ENCODE measurements at regions of chr22 and their contacts with region 1.

Region 1: DNA sequence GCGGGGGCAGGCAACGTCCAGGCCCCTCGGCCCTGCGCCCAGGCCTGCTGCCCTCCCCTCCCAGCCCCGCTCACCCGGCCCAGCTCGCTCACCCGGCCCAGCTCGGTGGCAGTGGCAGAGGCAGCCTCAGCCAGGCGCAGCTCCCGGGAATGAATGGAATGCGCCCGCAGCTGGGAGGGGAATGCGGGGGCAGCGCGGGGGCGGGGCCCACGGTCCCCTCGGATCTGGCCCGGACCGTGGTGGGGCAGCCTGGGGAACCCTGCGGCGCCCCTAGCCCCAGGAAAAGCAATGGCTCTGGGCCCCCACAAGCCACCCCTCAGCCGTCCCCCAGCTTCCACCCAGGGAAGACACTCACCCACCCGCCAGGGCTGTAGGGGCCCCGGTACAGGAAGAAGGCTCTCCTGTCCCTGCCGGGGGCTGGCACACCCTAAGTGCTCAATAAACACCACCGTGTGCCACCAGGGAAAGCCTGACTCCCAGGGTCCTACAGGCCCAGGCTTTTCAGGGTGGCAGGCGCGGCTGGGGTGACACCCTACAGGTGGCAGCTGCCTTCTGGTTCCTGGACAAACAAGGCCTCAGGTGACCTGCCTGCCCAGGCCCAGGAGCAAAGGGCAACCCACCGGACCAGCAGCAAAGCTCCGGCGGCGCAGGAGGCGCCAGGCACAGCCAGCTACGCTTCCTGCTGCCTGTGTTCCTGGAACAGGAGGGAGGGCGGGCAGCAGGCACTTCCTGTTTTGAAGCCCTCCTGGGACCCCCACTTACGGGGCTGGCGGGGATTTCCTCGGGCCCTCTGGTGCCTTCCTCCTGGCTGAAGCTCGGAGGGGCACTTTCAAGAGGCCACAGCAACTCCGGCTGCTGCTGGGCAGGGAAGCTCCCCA is 13.8 kb downstream of the PLXNB2 start:
- DNase-seq: peak in 5 of 10 donors; percentile 17 to 37 (median 33)
- ATAC-seq: peak; percentile 60 to 63
- H3K4me3 Mint-ChIP-seq: peak overlapping the region; percentile 25 to 82 (median 60)
- H3K27ac Mint-ChIP-seq: peak overlapping the region in 6 of 10 donors; percentile 6 to 66 (median 33)
- H3K4me1 Mint-ChIP-seq: peaks cover 11 to 23% (median 19%) of the 10 kb centered on the region in 4 donors
- H3K27me3 Mint-ChIP-seq: peaks cover 0 to 31% (median 0%) of the 10 kb centered on the region in 5 donors

Region 2: DNA sequence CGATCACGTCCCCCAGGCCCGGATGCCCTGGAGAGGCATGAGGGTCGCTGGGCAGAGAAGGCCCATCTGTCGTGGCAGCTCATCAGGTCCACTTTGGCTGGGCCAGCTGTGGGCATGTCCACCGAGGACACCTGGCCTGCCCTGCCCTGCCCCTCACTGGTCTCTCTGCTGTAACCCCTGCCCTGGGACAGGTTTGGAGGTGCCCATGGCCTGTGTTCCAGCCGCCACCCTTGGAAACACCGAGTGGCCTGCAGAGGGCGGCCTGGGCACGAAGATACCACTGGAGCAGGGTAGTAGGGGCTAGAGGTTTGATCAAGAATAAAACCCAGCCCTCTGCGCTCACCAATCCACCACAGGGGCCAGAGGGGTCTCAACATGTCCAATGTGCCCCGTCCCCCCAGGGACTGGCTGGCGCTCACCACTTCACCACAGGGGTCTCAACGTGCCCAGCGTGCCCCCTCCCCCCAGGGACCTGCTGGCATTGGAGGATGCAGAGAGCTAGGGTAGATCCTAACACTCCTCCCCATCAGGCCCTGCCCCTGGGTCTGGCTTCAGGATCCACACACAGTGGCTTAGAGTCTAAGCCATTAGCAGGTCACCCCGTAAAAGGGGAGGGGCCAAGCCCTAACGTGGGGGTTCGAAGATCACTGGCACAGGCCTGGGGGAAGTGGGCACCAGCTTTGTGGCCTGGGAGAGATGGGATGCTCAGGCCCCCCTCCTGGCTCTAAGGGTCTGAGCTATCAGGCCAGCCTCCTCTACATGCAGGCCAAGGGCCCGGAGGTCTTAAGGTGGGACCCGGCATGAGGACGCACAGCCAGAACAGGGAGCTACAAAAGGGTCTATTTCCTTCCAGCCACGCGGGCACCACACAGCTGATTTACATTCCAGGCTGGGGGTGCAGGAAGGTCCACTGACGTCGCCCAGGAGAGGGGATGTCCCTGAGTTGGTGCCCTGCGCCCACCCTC is 41.3 kb before region 1 on chr22:
- POLR2A ChIA-PET with region 1: no interaction called
- DNase-seq: peak; percentile 57 to 86 (median 70)
- ATAC-seq: peak; percentile 72 to 80
- H3K4me3 Mint-ChIP-seq: peak overlapping the region; percentile 52 to 83 (median 70)
- H3K27ac Mint-ChIP-seq: peak overlapping the region in 9 of 10 donors; percentile 23 to 83 (median 43)
- H3K4me1 Mint-ChIP-seq: peaks cover 0 to 20% (median 6%) of the 10 kb centered on the region in 4 donors
- H3K27me3 Mint-ChIP-seq: no peaks in the 10 kb centered on the region

Region 3: GRCh38 chr22:50306753-50307749 is 13.4 kb after region 1 on chr22 and contains the start of gene PLXNB2:
- POLR2A ChIA-PET with region 1: interaction called, 15 read pairs
- DNase-seq: peak in 4 of 10 donors; percentile 26 to 39 (median 32)
- ATAC-seq: peak; percentile 70 to 78
- H3K4me3 Mint-ChIP-seq: peak within 1 kb of the TSS in 8 of 10 donors; percentile 24 to 70 (median 48)
- H3K27ac Mint-ChIP-seq: peak within 1 kb of the TSS in 3 of 10 donors; percentile 27 to 56 (median 34)
- H3K4me1 Mint-ChIP-seq: peaks cover 9 to 26% (median 14%) of the 10 kb centered on the region in 4 donors
- H3K27me3 Mint-ChIP-seq: peaks cover 4 to 19% (median 7%) of the 10 kb centered on the region in 5 donors
- polyA plus RNA-seq, gene PLXNB2: 0.72 to 4.1 (median 1.1) TPM

Region 4: GRCh38 chr22:50314455-50315288 is 21.0 kb after region 1 on chr22:
- POLR2A ChIA-PET with region 1: interaction called, 19 read pairs
- DNase-seq: peak; percentile 39 to 83 (median 65)
- ATAC-seq: peak; percentile 93 to 95
- H3K4me3 Mint-ChIP-seq: peak overlapping the region; percentile 80 to 99 (median 90)
- H3K27ac Mint-ChIP-seq: peak overlapping the region; percentile 87 to 97 (median 94)
- H3K4me1 Mint-ChIP-seq: peaks cover 13 to 22% (median 20%) of the 10 kb centered on the region in 4 donors
- H3K27me3 Mint-ChIP-seq: no peaks in the 10 kb centered on the region

Region 5: GRCh38 chr22:50348058-50348457 is 54.4 kb after region 1 on chr22:
- POLR2A ChIA-PET with region 1: no interaction called
- DNase-seq: no peak
- ATAC-seq: no peak
- H3K4me3 Mint-ChIP-seq: no peak overlapping the region
- H3K27ac Mint-ChIP-seq: no peak overlapping the region
- H3K4me1 Mint-ChIP-seq: peaks cover 0 to 3% (median 0%) of the 10 kb centered on the region in 4 donors
- H3K27me3 Mint-ChIP-seq: no peaks in the 10 kb centered on the region

Region 6: GRCh38 chr22:50498322-50498890 is 204.7 kb after region 1 on chr22:
- POLR2A ChIA-PET with region 1: no interaction called
- DNase-seq: peak; percentile 40 to 86 (median 68)
- ATAC-seq: peak; percentile 95 to 98
- H3K4me3 Mint-ChIP-seq: no peak overlapping the region
- H3K27ac Mint-ChIP-seq: no peak overlapping the region
- H3K4me1 Mint-ChIP-seq: peaks cover 0 to 13% (median 5%) of the 10 kb centered on the region in 4 donors
- H3K27me3 Mint-ChIP-seq: no peaks in the 10 kb centered on the region